ENCODE measurements at regions of chr1 and their contacts with region 1.

Region 1: GRCh38 chr1:1115786-1116700 is at the start of gene C1orf159:
- DNase-seq: peak; percentile 65
- H3K4me3 ChIP-seq: peak within 1 kb of the TSS; percentile 73
- CTCF ChIP-seq: no peak

Region 2: GRCh38 chr1:1250786-1251284 is 134.8 kb after region 1 on chr1:
- CTCF ChIA-PET with region 1: interaction called, 37 read pairs
- POLR2A ChIA-PET with region 1: no interaction called
- DNase-seq: no peak
- H3K4me3 ChIP-seq: no peak overlapping the region
- CTCF ChIP-seq: no peak

Region 3: DNA sequence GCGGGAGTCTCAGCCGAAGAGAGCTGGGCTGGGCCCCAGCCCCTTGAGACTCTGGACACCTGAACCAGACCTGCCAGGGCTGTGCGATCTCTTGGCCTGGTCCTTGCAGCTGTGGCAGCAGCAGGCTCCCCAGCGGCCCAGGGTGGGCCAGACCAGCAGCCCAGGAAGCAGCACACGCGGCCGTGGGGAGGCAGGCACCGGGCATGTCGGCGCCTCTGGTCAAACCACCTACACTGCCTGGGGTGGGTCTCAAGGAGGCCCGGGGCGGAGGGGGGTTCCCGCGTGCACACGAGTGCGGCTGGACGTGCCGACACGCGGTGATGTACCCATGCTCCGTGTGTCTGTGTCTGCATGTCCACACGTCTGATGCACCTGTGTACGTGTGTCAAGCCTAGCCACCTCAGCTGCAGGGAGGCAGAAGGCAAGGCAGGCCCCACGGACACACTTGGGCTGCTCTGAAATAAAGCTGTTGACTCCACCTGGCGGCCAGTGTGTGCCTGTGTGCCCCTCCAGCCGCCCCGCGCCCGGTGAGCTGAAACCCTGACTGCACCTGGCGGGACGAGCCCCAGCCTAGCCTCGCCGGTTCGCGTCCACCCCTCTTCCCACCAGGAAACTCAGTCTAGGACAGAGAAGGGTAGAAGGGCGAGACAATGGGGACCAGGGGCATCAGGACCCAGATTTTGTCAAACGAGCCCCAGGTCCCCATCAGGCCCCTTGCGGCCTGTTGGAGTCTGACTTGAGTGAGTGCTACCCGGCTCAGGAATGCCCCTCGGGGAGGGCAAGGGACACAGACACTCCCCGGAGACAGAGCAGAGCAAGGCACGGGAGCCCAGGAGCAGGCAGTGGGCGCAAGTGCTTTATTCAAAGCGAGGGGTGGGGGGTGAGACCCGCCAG is 175.8 kb after region 1 on chr1:
- CTCF ChIA-PET with region 1: interaction called, 60 read pairs
- POLR2A ChIA-PET with region 1: no interaction called
- DNase-seq: no peak
- H3K4me3 ChIP-seq: no peak overlapping the region
- CTCF ChIP-seq: peak; percentile 62